ENCODE measurements at regions of chr20 and their contacts with region 1.

Region 1: DNA sequence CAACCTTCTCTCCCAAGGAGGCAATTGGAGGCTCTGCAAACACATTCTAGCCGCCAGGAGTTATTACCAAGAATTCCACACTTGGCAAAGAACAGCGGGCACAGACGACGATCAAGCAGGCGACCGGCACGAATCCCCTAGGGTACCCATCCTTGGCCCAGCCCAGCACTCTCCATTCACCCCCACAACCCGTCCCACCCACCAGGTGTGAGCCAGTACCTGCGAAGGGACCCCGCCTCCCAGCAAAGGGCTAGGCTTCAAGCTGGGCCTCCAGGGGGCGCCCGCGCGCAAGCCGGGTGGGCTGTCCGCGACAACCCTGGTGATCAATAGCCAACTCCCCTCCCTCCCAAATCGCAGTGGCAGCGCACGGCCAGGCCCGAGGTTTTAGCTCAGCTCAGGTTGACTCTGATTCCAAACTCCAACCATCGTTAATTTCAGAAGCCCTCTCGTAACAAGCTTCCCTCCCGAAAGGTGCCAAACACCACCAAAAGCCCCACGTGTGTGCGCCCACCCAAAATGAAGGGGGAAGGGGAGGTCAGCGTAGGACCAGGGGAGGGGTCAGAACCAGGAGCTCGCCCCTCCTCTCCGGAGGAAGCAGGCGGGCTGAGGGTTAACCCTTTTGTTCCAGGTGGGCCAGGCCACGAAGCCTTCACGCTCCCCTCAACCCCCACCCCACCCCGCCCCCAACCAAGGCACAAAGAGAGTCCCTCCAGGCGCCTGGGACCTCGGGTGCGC is 2.1 kb downstream of the SALL4 start:
- DNase-seq: peak; percentile 59
- H3K4me3 Mint-ChIP-seq: peak overlapping the region; percentile 63
- H3K27ac Mint-ChIP-seq: no peak overlapping the region
- H3K4me1 Mint-ChIP-seq: no peaks in the 10 kb centered on the region
- H3K27me3 Mint-ChIP-seq: no peaks in the 10 kb centered on the region
- CTCF ChIP-seq: peak; percentile 82

Region 2: GRCh38 chr20:51639206-51639832 is 160.9 kb before region 1 on chr20:
- CTCF ChIA-PET with region 1: interaction called, 8 read pairs
- POLR2A ChIA-PET with region 1: no interaction called
- intact Hi-C with region 1: loop called (anchors 2 kb)
- DNase-seq: peak; percentile 76
- H3K4me3 Mint-ChIP-seq: no peak overlapping the region
- H3K27ac Mint-ChIP-seq: peak overlapping the region; percentile 53
- H3K4me1 Mint-ChIP-seq: no peaks in the 10 kb centered on the region
- H3K27me3 Mint-ChIP-seq: no peaks in the 10 kb centered on the region
- CTCF ChIP-seq: peak; percentile 91

Region 3: DNA sequence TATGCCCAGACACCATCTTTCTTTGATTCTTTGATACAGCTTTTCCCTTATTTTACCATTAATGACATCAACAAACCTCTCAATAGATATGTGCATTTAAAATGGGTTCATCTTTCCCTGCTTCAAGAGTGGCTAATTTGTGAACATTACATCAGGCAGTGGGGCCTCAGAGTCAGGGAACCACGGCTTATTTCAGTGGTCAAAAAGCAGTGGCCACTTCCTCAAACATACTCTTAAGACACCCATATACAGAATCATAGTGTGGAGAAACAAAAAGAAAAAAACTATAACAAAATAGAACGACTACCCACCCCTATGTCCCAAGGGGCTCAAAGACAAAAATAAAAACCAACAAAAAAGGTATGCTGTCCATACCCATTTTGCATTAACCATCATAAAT is 10.8 kb before region 1 on chr20:
- CTCF ChIA-PET with region 1: interaction called, 45 read pairs
- POLR2A ChIA-PET with region 1: no interaction called
- intact Hi-C with region 1: no loop called
- DNase-seq: no peak
- H3K4me3 Mint-ChIP-seq: no peak overlapping the region
- H3K27ac Mint-ChIP-seq: no peak overlapping the region
- H3K4me1 Mint-ChIP-seq: no peaks in the 10 kb centered on the region
- H3K27me3 Mint-ChIP-seq: no peaks in the 10 kb centered on the region
- CTCF ChIP-seq: no peak

Region 4: GRCh38 chr20:51871867-51872304 is 71.7 kb after region 1 on chr20:
- CTCF ChIA-PET with region 1: no interaction called
- POLR2A ChIA-PET with region 1: no interaction called
- intact Hi-C with region 1: no loop called
- DNase-seq: no peak
- H3K4me3 Mint-ChIP-seq: no peak overlapping the region
- H3K27ac Mint-ChIP-seq: no peak overlapping the region
- H3K4me1 Mint-ChIP-seq: no peaks in the 10 kb centered on the region
- H3K27me3 Mint-ChIP-seq: no peaks in the 10 kb centered on the region
- CTCF ChIP-seq: no peak

Region 5: DNA sequence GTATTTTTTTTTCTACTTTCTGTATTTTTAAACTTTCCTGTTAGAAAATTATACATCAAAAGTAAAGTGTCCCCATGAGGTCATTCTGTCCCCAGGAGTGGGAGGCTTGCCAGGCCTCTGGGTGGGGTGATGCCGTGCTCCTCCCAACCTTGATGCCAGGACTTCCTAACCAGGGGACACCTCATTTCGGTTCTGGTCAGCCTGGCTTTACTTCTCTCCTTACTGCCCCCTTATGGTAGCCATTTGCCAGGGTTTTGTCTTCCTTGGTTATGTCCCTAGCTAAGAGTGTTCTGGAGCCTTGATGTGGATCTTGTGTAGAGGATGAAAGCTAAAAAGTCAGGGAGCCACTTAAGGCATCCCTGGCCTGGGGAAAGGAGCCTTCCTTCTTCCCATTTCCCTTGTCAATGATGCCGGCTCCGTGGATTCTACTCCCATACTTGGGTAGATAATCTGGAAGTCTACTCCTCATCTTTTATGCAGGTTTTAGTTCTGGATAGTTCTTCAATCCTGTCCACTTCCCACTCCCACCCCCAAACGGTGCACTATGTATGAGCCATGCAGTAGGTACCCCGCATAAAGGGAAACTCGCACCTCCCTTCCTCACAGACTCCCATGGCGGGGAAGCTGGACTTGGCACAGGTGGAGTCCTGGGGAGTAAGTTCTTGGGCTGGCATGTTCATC is 166.2 kb after region 1 on chr20:
- CTCF ChIA-PET with region 1: interaction called, 9 read pairs
- POLR2A ChIA-PET with region 1: no interaction called
- intact Hi-C with region 1: loop called (anchors 1 kb)
- DNase-seq: peak; percentile 79
- H3K4me3 Mint-ChIP-seq: no peak overlapping the region
- H3K27ac Mint-ChIP-seq: no peak overlapping the region
- H3K4me1 Mint-ChIP-seq: no peaks in the 10 kb centered on the region
- H3K27me3 Mint-ChIP-seq: no peaks in the 10 kb centered on the region
- CTCF ChIP-seq: peak; percentile 57

Region 6: GRCh38 chr20:52075400-52075799 is 275.2 kb after region 1 on chr20:
- CTCF ChIA-PET with region 1: interaction called, 97 read pairs
- POLR2A ChIA-PET with region 1: no interaction called
- intact Hi-C with region 1: no loop called
- DNase-seq: no peak
- H3K4me3 Mint-ChIP-seq: no peak overlapping the region
- H3K27ac Mint-ChIP-seq: no peak overlapping the region
- H3K4me1 Mint-ChIP-seq: peaks cover 6% of the 10 kb centered on the region
- H3K27me3 Mint-ChIP-seq: no peaks in the 10 kb centered on the region
- CTCF ChIP-seq: no peak